Vagina (tissue), 2 donors: ENCODE measurements at regions of chr3 and their contacts with region 1.

Region 1: DNA sequence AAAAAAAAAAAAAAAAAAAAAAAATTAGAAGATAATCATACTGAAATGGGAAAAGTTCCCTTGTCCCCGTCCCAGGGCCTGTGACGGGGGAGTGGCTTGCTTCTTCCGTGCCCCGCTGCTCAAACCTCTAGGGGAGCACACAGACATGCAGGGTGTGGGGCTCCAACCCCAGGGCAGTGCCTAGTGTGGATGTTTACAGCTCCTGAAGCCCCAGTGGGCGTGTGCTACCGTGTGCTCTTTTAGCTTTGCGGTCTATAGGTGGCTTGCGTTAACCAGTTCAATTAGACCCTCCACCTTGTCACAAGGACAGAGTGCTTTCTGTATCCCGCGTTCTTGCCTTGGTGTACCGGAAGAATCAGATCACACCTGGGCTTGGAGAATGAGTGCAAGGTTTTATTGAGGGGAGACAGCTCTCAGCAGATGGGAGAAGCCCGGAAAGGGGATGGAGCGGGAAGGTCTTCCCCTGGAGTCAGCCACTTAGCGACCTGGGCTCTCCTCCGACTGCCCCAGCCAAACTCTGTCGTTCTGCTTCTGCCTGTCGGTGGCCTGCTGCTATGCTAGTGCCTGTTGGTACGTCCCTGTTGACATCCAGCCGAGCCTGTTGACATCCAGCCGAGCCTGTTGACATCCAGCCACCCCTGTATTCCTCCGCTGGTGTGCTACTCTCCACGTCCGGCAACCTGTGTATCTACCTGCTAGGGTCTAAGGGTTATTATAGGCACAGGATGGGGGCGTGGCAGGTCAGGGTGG is 569.8 kb downstream of the VGLL3 start:
- DNase-seq: no peak
- H3K4me3 ChIP-seq: no peak overlapping the region
- H3K27ac ChIP-seq: no peak overlapping the region
- H3K4me1 ChIP-seq: no peaks in the 10 kb centered on the region
- H3K27me3 ChIP-seq: no peaks in the 10 kb centered on the region
- CTCF ChIP-seq: no peak
- POLR2A ChIP-seq: no peak

Region 2: DNA sequence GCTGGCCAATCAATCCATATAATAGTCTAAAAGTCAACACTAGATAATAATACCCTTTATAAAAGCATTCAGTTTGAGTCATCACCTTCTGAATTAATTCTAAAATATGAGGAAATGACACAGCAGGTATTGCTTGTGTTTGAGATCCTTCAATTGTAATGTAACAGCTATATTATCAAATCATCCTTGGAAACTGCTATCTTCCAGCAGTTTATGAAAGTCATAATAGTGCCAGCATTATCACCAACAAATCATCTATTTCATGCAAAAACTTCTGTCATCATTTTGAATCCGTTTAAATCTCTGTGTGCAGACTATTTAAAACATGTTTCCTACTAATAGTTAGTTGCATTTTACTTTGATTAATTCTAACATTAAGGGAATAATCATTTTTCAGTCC is 993.7 kb before region 1 on chr3:
- intact Hi-C with region 1: loop called (anchors 5 kb)
- DNase-seq: no peak
- H3K4me3 ChIP-seq: no peak overlapping the region
- H3K27ac ChIP-seq: no peak overlapping the region
- H3K4me1 ChIP-seq: no peaks in the 10 kb centered on the region
- H3K27me3 ChIP-seq: no peaks in the 10 kb centered on the region
- CTCF ChIP-seq: no peak
- POLR2A ChIP-seq: no peak